Naive thymus-derived CD4-positive, alpha-beta T cell (primary cell): ENCODE measurements at regions of chr16 and their contacts with region 1.

Region 1: DNA sequence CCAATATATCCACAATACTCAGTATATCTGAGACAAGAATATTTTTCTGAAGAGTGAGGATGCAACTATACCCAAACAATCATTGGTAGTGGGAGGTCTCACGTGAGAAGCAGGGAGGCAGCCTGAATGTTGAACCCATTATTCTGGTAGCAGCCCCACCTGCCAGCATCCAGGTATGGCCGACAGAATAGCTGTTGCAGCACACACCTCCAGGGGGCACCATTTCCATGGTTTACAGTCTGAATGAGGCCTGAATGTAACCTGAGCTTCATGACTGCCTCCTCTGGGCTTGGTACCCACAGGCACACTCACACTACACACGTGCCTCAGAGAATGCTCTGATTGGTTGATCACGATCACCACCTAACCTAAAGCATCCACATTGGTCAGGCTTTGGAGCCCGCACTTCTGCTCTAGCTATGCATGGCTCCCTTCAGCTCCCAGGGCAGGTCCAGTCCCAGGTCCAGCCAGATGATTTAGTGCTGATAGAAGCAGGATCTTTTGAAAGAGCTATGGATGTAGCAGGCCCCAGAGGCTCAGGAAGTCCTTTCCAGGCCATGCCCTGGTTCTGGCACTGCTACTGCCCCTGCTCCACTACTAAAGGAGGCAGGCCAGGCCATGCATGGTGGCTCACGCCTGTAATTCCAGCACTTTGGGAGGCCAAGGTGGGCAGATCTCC is 11.0 kb upstream of the CBFB start:
- DNase-seq: peak; percentile 58 to 87 (median 84)
- ATAC-seq: peak; percentile 96
- H3K4me3 ChIP-seq: no peak overlapping the region
- H3K4me3 Mint-ChIP-seq: peak overlapping the region in 2 of 10 donors; percentile 16 to 21
- H3K27ac ChIP-seq: no peak overlapping the region
- H3K27ac Mint-ChIP-seq: peak overlapping the region in 2 of 9 donors; percentile 43 to 75
- H3K4me1 ChIP-seq: peaks cover 4 to 11% of the 10 kb centered on the region in 2 donors
- H3K4me1 Mint-ChIP-seq: peaks cover 0 to 55% (median 8%) of the 10 kb centered on the region in 7 donors
- H3K27me3 ChIP-seq: no peaks in the 10 kb centered on the region
- H3K27me3 Mint-ChIP-seq: no peaks in the 10 kb centered on the region

Region 2: DNA sequence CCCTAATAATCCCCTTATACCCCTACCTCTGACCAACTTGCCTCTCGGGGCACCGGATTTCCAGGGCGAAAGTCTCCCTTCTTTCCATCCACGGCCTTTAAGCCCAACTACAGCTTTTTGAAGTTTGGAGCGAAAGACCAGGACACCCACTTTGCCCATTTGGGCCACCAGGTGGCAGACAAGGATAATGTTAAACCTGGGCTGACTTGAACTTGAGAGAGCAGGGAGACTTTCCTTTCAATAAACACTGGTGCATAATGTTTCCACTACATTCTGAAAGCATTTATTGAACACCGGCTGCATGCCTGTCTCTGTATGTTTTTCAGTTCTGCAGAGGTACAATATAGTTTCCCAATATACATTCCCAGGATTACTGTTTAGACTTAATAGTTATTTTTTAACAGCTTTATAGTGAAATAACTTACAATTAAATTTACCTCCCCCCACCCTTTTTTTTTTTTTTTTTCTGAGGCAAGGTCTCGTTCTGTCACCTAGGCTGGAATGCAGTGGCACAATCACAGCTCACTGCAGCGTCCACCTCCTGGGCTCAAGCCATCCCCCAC is 63.8 kb before region 1 on chr16:
- CTCF ChIA-PET with region 1: interaction called, 4 read pairs
- POLR2A ChIA-PET with region 1: no interaction called
- intact Hi-C with region 1: loop called in 1 of 2 experiments (anchors 2 kb)
- DNase-seq: peak; percentile 46 to 78 (median 67)
- ATAC-seq: peak; percentile 86
- H3K4me3 ChIP-seq: no peak overlapping the region
- H3K4me3 Mint-ChIP-seq: peak overlapping the region in 1 of 10 donors; percentile 5
- H3K27ac ChIP-seq: no peak overlapping the region
- H3K27ac Mint-ChIP-seq: peak overlapping the region in 1 of 9 donors; percentile 4
- H3K4me1 ChIP-seq: no peaks in the 10 kb centered on the region
- H3K4me1 Mint-ChIP-seq: peaks cover 11 to 27% (median 15%) of the 10 kb centered on the region in 7 donors
- H3K27me3 ChIP-seq: no peaks in the 10 kb centered on the region
- H3K27me3 Mint-ChIP-seq: peaks cover 31 to 40% (median 35%) of the 10 kb centered on the region in 5 donors

Region 3: DNA sequence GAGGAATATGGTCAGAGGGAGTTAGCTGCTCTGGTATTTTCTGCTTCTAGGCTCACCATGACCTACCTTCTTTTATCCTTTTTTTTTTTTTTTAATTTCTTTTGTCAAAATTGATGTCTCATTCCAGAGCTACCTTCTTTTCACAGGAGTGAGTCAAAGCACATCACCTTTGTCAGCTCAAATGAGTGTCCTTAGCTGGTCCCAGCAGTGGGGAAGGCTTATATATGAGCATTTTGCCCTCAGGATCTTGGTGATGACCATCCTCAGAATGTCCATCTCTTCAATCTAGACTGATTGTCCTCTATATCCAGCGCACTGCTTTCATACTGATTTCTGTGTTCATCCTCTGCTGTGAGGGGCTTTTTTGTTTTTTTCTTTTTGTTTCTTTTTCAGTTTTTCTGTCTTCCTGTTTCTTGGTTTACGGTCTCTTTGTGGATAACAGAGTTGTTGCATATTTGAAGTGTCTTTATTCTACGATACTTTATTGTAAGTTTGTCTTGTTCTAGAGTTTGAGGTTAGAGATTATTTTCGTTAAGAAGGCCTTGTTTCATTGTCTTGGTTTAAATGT is 35.9 kb after region 1 on chr16:
- CTCF ChIA-PET with region 1: interaction called, 3 read pairs
- POLR2A ChIA-PET with region 1: no interaction called
- intact Hi-C with region 1: loop called in 1 of 2 experiments (anchors 5 kb)
- DNase-seq: peak in 6 of 9 donors; percentile 10 to 46 (median 23)
- ATAC-seq: peak; percentile 46
- H3K4me3 ChIP-seq: peak overlapping the region; percentile 47
- H3K4me3 Mint-ChIP-seq: peak overlapping the region; percentile 34 to 91 (median 76)
- H3K27ac ChIP-seq: peak overlapping the region; percentile 45
- H3K27ac Mint-ChIP-seq: peak overlapping the region; percentile 63 to 93 (median 89)
- H3K4me1 ChIP-seq: peaks cover 19 to 20% of the 10 kb centered on the region in 2 donors
- H3K4me1 Mint-ChIP-seq: peaks cover 36 to 60% (median 44%) of the 10 kb centered on the region in 7 donors
- H3K27me3 ChIP-seq: no peaks in the 10 kb centered on the region
- H3K27me3 Mint-ChIP-seq: no peaks in the 10 kb centered on the region

Region 4: DNA sequence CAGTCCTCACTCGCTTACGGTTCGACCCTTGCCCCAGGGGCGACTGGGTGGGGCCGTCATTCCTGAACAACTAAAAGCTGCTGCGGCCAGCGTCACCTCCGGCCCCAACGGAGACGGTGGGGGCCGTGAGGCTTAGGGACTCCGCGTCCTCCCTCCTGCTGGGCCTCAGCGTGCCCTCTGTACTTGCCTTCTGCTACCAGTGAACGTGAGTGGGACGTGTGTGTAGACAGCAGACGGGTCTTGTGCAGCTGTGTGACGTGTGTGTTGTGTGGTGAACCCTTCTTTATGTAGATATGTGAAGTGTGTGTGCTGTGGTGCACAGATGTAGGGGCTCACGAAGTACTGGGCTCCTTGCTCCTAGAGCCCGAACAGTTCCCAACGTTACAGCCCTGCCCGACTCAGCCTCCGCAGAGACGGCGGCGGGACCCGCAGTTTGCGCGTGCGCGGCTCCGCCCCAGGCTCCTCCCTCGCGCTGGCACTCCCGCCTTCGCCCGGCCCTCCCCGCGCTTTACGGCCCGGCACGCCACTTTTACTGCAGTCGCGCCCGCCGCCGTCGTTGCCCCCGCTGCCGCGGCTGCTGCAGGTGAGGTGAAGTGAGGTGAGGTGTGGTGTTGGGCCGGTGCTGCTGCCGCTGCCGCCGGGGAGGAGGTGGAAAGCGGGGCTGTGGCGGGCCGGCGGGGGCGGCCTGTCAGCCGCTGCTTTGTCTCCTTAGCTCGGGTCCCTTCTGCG is 91.6 kb after region 1 on chr16 and contains the start of gene PHAF1:
- CTCF ChIA-PET with region 1: interaction called, 4 read pairs
- POLR2A ChIA-PET with region 1: interaction called, 3 read pairs
- intact Hi-C with region 1: loop called (anchors 2 kb)
- DNase-seq: peak; percentile 93 to 99 (median 97)
- ATAC-seq: peak; percentile 95
- H3K4me3 ChIP-seq: peak within 1 kb of the TSS; percentile 91
- H3K4me3 Mint-ChIP-seq: peak within 1 kb of the TSS; percentile 91 to 96 (median 94)
- H3K27ac ChIP-seq: peak within 1 kb of the TSS; percentile 78
- H3K27ac Mint-ChIP-seq: peak within 1 kb of the TSS; percentile 81 to 95 (median 87)
- H3K4me1 ChIP-seq: peaks cover 9 to 11% of the 10 kb centered on the region in 2 donors
- H3K4me1 Mint-ChIP-seq: peaks cover 19 to 43% (median 31%) of the 10 kb centered on the region in 7 donors
- H3K27me3 ChIP-seq: no peaks in the 10 kb centered on the region
- H3K27me3 Mint-ChIP-seq: no peaks in the 10 kb centered on the region
- total RNA-seq, gene PHAF1: 17.8 to 29.6 (median 21.2) TPM

Region 5: GRCh38 chr16:67470359-67470758 is 452.4 kb after region 1 on chr16:
- CTCF ChIA-PET with region 1: no interaction called
- POLR2A ChIA-PET with region 1: no interaction called
- intact Hi-C with region 1: no loop called
- DNase-seq: no peak
- ATAC-seq: no peak
- H3K4me3 ChIP-seq: no peak overlapping the region
- H3K4me3 Mint-ChIP-seq: no peak overlapping the region
- H3K27ac ChIP-seq: no peak overlapping the region
- H3K27ac Mint-ChIP-seq: no peak overlapping the region
- H3K4me1 ChIP-seq: peaks cover 0 to 13% of the 10 kb centered on the region in 2 donors
- H3K4me1 Mint-ChIP-seq: peaks cover 10 to 70% (median 54%) of the 10 kb centered on the region in 7 donors
- H3K27me3 ChIP-seq: no peaks in the 10 kb centered on the region
- H3K27me3 Mint-ChIP-seq: no peaks in the 10 kb centered on the region